H1 (cell line): ENCODE measurements at regions of chr15 and their contacts with region 1.

Region 1: GRCh38 chr15:24856397-24857390 is 98.1 kb upstream of the SNRPN start:
- DNase-seq: peak; percentile 88 to 97
- H3K4me3 ChIP-seq: peak overlapping the region in 3 of 4 experiments; percentile 1 to 57 (median 34); a peak in 5 of 8 replicates
- H3K27ac ChIP-seq: peak overlapping the region; percentile 41; the same call in 1 of the 2 replicates
- H3K4me1 ChIP-seq: peaks cover 0 to 6% (median 1%) of the 10 kb centered on the region in 4 experiments; a peak in 3 of 7 replicates
- H3K27me3 ChIP-seq: no peaks in the 10 kb centered on the region
- CTCF ChIP-seq: peak in 1 of 3 experiments; percentile 19; a peak in 1 of 4 replicates
- EP300 ChIP-seq: peak in 1 of 2 experiments; percentile 37; a peak in 1 of 3 replicates
- POLR2A ChIP-seq: no peak; a peak in 1 of 3 replicates
- RAD21 ChIP-seq: peak; percentile 24 to 25; a peak in 3 of 4 replicates

Region 2: GRCh38 chr15:24878153-24878552 is 21.5 kb after region 1 on chr15:
- CTCF ChIA-PET with region 1: no interaction called
- POLR2A ChIA-PET with region 1: interaction called, 15 read pairs
- DNase-seq: no peak
- H3K4me3 ChIP-seq: no peak overlapping the region
- H3K27ac ChIP-seq: no peak overlapping the region
- H3K4me1 ChIP-seq: peaks cover 0 to 8% (median 4%) of the 10 kb centered on the region in 4 experiments; a peak in 2 of 7 replicates
- H3K27me3 ChIP-seq: no peaks in the 10 kb centered on the region
- CTCF ChIP-seq: no peak
- EP300 ChIP-seq: no peak
- POLR2A ChIP-seq: no peak
- RAD21 ChIP-seq: no peak

Region 3: GRCh38 chr15:24898715-24899272 is 42.1 kb after region 1 on chr15:
- CTCF ChIA-PET with region 1: interaction called, 3 read pairs
- POLR2A ChIA-PET with region 1: interaction called, 28 read pairs
- DNase-seq: peak; percentile 34 to 58
- H3K4me3 ChIP-seq: peak overlapping the region in 1 of 4 experiments; percentile 14; a peak in 1 of 8 replicates
- H3K27ac ChIP-seq: no peak overlapping the region
- H3K4me1 ChIP-seq: peaks cover 3 to 9% (median 7%) of the 10 kb centered on the region in 4 experiments
- H3K27me3 ChIP-seq: no peaks in the 10 kb centered on the region
- CTCF ChIP-seq: no peak
- EP300 ChIP-seq: peak in 1 of 2 experiments; percentile 84; a peak in 1 of 3 replicates
- POLR2A ChIP-seq: no peak
- RAD21 ChIP-seq: no peak; a peak in 1 of 4 replicates